IMR-90 (cell line): ENCODE measurements at regions of chr9 and their contacts with region 1.

Region 1: DNA sequence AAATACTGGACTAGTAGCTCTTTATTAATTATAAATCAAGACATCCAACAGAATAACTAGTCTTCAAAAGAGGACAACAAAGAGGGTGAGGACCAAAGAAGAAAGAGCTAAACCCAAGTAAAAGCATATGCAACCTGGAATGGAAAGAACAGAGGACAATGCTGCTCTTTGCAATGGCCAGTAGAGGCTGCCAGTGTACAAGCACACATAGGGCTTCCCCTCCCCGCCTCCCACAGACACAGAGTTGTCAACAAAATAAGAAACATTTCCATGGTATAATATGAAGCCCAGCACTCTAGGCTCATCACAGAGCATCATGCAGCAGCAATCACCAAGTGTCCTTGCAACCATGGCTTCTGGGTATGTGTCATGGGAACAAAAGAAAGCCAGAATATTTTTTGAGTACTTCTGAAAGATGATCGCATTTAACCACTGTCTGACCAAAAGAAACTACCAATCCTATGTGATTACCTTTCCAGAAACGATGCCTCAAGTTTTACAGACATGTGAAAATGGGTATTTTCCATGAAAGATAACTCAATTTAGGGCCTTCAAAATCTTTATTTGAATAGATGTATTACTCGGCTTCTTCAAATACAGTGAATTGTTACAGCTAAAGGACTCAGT is 58.1 kb downstream of the RFX3 start:
- DNase-seq: peak; percentile 72
- ATAC-seq: peak; percentile 100
- H3K4me3 ChIP-seq: no peak overlapping the region
- H3K27ac ChIP-seq: no peak overlapping the region
- H3K4me1 ChIP-seq: no peaks in the 10 kb centered on the region
- H3K27me3 ChIP-seq: no peaks in the 10 kb centered on the region
- CTCF ChIP-seq: peak; percentile 91
- POLR2A ChIP-seq: peak; percentile 54; the same call in 1 of the 2 replicates
- RAD21 ChIP-seq: peak; percentile 95

Region 2: DNA sequence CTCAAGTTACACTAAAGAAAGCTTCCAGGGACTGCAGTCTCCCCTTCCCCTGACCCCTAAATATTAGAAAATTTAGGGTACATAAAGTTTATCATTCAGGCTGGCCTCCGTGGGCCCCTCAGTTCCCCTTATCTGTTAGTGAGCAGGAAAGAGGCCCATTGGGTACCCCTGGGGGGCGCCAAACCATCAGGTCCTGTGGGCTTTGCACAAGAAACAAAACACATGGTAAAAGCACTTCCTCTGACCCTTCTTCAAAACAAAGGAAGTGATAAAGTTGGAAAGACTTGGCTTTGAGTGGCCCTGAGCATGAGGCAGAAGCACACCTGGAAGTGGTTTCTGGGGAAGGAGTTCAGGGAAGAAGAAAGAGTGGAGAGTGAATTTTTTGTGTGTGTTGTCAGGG is 1239.6 kb before region 1 on chr9:
- CTCF ChIA-PET with region 1: no interaction called
- POLR2A ChIA-PET with region 1: no interaction called
- dilution Hi-C with region 1: no loop called
- in situ Hi-C with region 1: no loop called
- intact Hi-C with region 1: no loop called
- DNase-seq: no peak
- ATAC-seq: no peak
- H3K4me3 ChIP-seq: no peak overlapping the region
- H3K27ac ChIP-seq: no peak overlapping the region
- H3K4me1 ChIP-seq: no peaks in the 10 kb centered on the region
- H3K27me3 ChIP-seq: no peaks in the 10 kb centered on the region
- CTCF ChIP-seq: 0 out of 2 replicates have a peak, but pooled peaks have one; percentile 15
- POLR2A ChIP-seq: no peak
- RAD21 ChIP-seq: peak; percentile 30; the same call in 1 of the 2 replicates

Region 3: GRCh38 chr9:3954331-3955304 is 486.9 kb after region 1 on chr9:
- CTCF ChIA-PET with region 1: no interaction called
- POLR2A ChIA-PET with region 1: no interaction called
- dilution Hi-C with region 1: no loop called
- in situ Hi-C with region 1: no loop called
- intact Hi-C with region 1: loop called (anchors 5 kb)
- DNase-seq: peak; percentile 55
- ATAC-seq: peak; percentile 61
- H3K4me3 ChIP-seq: no peak overlapping the region
- H3K27ac ChIP-seq: peak overlapping the region; percentile 92
- H3K4me1 ChIP-seq: peaks cover 16% of the 10 kb centered on the region
- H3K27me3 ChIP-seq: no peaks in the 10 kb centered on the region
- CTCF ChIP-seq: no peak
- POLR2A ChIP-seq: no peak
- RAD21 ChIP-seq: no peak

Region 4: GRCh38 chr9:4086119-4087090 is 618.7 kb after region 1 on chr9:
- CTCF ChIA-PET with region 1: no interaction called
- POLR2A ChIA-PET with region 1: no interaction called
- dilution Hi-C with region 1: no loop called
- in situ Hi-C with region 1: no loop called
- intact Hi-C with region 1: loop called (anchors 10 kb)
- DNase-seq: peak; percentile 43
- ATAC-seq: no peak
- H3K4me3 ChIP-seq: no peak overlapping the region
- H3K27ac ChIP-seq: peak overlapping the region; percentile 42; the same call in 1 of the 2 replicates
- H3K4me1 ChIP-seq: peaks cover 12% of the 10 kb centered on the region
- H3K27me3 ChIP-seq: no peaks in the 10 kb centered on the region
- CTCF ChIP-seq: no peak
- POLR2A ChIP-seq: no peak
- RAD21 ChIP-seq: no peak

Region 5: DNA sequence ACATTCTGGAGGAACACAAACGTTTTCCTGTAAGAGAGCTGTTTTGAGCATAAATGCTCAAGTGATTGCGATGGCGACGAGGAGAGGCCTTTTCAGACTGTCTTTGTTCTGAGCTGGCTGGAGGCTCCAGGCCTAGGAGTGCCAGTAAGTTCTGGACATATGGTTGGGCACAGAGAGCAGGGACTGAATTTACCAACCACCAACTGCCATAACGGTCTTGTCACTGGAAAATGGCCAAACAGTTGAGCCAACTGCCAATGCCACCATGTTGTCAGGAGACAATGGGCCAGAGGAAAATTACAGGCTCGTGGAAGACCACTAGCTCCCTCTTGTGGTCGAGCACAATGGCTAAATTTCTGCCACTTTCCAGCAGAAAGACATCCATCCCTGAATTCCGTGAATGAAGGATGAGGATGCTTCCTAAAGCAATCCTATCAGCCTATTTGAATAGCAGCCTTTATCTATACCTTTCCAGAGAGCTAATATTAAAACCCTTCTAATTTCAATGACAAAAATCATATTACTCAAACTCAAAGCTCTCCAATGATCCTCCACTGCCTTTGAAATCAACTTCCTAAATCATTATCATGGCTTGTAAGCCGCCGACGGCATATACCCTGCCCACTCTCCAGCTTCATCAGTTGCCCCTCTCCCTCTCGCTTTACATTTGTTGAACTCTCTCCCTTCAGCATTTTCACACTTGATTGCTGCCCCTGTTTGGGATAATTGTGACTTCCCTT is 899.1 kb after region 1 on chr9:
- CTCF ChIA-PET with region 1: no interaction called
- POLR2A ChIA-PET with region 1: no interaction called
- dilution Hi-C with region 1: no loop called
- in situ Hi-C with region 1: loop called (anchors 25 kb)
- intact Hi-C with region 1: loop called (anchors 5 kb)
- DNase-seq: peak; percentile 54
- ATAC-seq: no peak
- H3K4me3 ChIP-seq: no peak overlapping the region
- H3K27ac ChIP-seq: no peak overlapping the region
- H3K4me1 ChIP-seq: no peaks in the 10 kb centered on the region
- H3K27me3 ChIP-seq: peaks cover 2% of the 10 kb centered on the region
- CTCF ChIP-seq: peak; percentile 80
- POLR2A ChIP-seq: no peak
- RAD21 ChIP-seq: peak; percentile 93